Heart right ventricle (tissue), 16 donors: ENCODE measurements at regions of chr1 and their contacts with region 1.

Region 1: DNA sequence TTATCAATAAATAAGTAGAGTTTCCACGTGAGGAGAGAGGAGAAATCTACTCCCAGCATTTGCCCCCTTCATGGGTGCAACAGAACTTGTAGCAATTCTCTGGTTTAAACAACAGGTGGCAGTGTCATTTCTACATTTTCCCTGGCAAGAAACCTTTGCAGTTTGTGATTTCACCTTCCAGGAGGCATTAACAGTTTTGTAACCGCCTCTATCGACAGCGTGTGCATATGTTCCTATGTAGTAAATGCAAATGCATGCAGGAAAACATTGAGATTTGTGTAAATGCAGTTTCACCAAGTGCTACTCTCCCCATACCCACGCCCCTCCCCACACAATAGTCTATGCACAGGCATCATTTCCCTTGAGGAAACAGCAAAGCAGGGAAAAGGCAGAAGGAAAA is 494.7 kb downstream of the SMYD3 start:
- DNase-seq: no peak
- ATAC-seq: no peak
- H3K4me3 ChIP-seq: no peak overlapping the region
- H3K27ac ChIP-seq: no peak overlapping the region
- H3K4me1 ChIP-seq: no peaks in the 10 kb centered on the region
- H3K27me3 ChIP-seq: no peaks in the 10 kb centered on the region
- CTCF ChIP-seq: peak; percentile 26 to 74 (median 63)

Region 2: DNA sequence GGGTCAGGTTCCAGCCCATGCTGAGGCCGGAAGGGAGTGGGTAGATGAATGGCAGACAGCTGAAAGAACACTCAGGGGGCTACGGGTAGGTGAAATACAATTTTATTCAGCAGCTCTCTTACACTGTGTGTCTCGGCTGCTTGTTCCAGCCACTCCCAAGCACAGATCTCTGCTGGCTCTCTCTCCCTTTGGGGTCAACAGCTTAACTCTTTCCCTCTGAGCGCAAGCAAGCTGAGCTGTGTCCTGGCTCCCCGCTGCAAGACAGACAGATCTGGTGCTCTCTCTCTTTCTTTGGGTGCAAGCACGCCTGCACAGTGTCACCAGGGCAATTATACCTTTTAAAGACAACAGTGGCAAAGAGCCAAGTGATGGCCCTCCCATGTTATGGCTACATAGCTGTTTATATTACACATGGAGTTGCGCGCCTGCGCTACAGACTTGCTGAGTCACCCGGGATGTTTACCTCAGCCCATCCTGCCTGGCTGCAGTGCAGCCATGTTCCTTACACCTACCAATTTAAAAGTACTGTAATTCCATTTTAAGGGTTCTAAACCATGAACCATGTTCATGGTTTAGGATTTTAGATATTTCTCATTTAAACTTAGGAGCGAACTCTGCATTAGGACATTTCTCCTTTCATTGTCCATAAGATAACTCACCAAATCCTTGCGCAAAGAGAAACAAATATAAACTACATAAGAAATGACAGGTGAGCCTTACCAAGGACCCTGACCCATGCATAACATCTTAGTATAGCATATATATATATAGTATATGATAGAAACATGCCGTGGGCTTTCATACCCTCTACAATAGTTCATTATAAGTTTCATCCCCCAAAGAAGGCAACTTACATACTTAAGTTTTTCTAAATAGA is 98.2 kb after region 1 on chr1:
- intact Hi-C with region 1: loop called in 4 of 10 experiments (anchors 5 to 10 kb)
- DNase-seq: no peak
- ATAC-seq: no peak
- H3K4me3 ChIP-seq: no peak overlapping the region
- H3K27ac ChIP-seq: no peak overlapping the region
- H3K4me1 ChIP-seq: peaks cover 0 to 12% (median 0%) of the 10 kb centered on the region in 9 donors
- H3K27me3 ChIP-seq: no peaks in the 10 kb centered on the region
- CTCF ChIP-seq: no peak

Region 3: GRCh38 chr1:246117066-246117791 is 104.9 kb after region 1 on chr1:
- intact Hi-C with region 1: loop called in 4 of 10 experiments (anchors 5 to 10 kb)
- DNase-seq: peak in 1 of 2 donors; percentile 21
- ATAC-seq: peak in 4 of 8 donors; percentile 59 to 73 (median 64)
- H3K4me3 ChIP-seq: no peak overlapping the region
- H3K27ac ChIP-seq: no peak overlapping the region
- H3K4me1 ChIP-seq: peaks cover 0 to 10% (median 0%) of the 10 kb centered on the region in 9 donors
- H3K27me3 ChIP-seq: no peaks in the 10 kb centered on the region
- CTCF ChIP-seq: peak in 7 of 9 donors; percentile 35 to 66 (median 57)

Region 4: DNA sequence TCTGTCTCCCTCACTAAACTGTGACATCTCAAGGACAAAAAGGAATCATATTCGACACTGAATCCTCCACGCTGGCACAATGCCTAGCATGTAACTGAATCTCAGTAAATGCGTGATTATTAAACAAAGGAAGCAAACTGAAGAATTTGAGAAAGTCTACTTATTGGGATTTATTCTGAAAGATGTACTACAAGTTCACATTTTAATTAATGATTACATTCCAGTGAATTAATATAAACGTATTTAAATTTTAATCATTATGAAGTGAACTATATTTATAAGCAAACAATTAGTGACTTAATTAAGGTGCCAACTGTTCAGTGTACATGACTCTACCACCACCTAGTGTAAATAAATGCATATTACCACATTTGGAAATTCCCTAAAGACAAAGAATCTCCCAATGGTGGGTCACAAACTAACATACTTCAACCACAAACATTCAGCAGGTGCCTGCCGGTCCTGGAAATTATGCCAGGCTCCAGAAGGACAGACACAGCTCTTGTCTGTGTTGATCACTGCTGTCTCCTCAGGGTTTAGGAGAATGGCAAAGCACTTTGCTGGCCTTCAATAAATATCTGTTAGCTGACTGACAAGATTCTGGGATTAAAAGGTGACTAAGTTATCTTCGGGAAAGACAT is 438.4 kb after region 1 on chr1:
- intact Hi-C with region 1: loop called (anchors 1 to 10 kb)
- DNase-seq: no peak
- ATAC-seq: peak in 1 of 8 donors; percentile 34
- H3K4me3 ChIP-seq: no peak overlapping the region
- H3K27ac ChIP-seq: no peak overlapping the region
- H3K4me1 ChIP-seq: peaks cover 0 to 16% (median 9%) of the 10 kb centered on the region in 9 donors
- H3K27me3 ChIP-seq: no peaks in the 10 kb centered on the region
- CTCF ChIP-seq: peak; percentile 43 to 78 (median 68)